Adrenal gland (tissue), 19 donors: ENCODE measurements at regions of chr14 and their contacts with region 1.

Region 1: GRCh38 chr14:61894452-61895077 is 132.3 kb downstream of the SNAPC1 start:
- DNase-seq: peak; percentile 27 to 80 (median 62)
- H3K4me3 ChIP-seq: no peak overlapping the region
- H3K27ac ChIP-seq: no peak overlapping the region
- H3K4me1 ChIP-seq: no peaks in the 10 kb centered on the region
- H3K27me3 ChIP-seq: no peaks in the 10 kb centered on the region
- CTCF ChIP-seq: peak; percentile 31 to 68 (median 47)
- POLR2A ChIP-seq: no peak

Region 2: GRCh38 chr14:61918998-61919397 is 24.4 kb after region 1 on chr14:
- intact Hi-C with region 1: no loop called
- DNase-seq: no peak
- H3K4me3 ChIP-seq: no peak overlapping the region
- H3K27ac ChIP-seq: no peak overlapping the region
- H3K4me1 ChIP-seq: no peaks in the 10 kb centered on the region
- H3K27me3 ChIP-seq: no peaks in the 10 kb centered on the region
- CTCF ChIP-seq: no peak
- POLR2A ChIP-seq: no peak

Region 3: DNA sequence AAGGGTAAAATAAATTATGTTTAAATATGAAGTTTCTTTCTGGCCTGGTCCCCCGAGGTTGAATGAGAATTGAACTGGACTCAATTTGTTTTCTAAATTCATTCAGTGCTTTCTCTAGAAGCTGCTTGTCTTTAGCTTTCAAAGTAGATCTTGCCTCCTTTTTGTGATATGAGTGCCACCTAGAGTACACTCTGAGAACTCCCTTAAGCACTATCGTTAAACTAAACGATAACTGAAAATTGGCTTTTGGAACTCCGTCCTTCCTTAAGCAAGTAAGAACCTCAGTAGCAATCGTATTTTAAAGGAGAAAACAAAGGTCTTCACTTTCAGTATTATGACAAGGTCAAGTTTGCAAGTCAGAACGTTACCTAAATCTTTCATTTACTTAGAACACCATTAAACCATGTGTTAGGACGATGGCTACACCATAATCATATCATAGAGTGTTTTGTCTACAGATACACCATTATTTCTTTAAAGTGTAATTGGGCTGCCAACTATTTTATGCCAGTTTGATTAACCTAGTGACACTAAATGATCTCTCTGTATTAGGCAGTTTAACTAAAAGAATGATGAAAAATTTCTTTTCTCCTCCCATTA is 232.4 kb after region 1 on chr14:
- intact Hi-C with region 1: loop called in 1 of 2 experiments (anchors 10 kb)
- DNase-seq: peak in 2 of 7 donors; percentile 6 to 17
- H3K4me3 ChIP-seq: no peak overlapping the region
- H3K27ac ChIP-seq: no peak overlapping the region
- H3K4me1 ChIP-seq: no peaks in the 10 kb centered on the region
- H3K27me3 ChIP-seq: peaks cover 6% of the 10 kb centered on the region
- CTCF ChIP-seq: peak; percentile 55 to 78 (median 66)
- POLR2A ChIP-seq: no peak

Region 4: DNA sequence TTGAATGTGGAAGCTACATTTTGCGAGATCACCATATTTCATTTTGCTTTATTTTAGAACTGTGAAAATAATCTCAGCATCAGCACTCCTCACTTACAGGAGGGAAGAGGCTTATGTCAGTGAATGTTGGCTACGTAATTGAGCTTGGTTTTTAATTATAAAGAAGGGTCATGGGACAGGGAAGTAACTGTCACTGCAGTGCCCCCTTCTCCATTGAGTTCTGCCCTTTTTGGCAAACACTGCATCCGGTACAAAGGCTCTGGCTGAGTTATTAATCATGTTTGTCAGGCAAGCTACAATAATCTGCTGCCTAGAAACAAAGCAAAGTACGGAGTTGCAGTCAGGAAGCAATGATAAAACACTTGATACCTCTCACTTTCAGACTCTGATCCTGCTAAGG is 414.3 kb after region 1 on chr14:
- intact Hi-C with region 1: no loop called
- DNase-seq: peak in 5 of 7 donors; percentile 4 to 70 (median 19)
- H3K4me3 ChIP-seq: no peak overlapping the region
- H3K27ac ChIP-seq: peak overlapping the region in 1 of 5 donors; percentile 26
- H3K4me1 ChIP-seq: no peaks in the 10 kb centered on the region
- H3K27me3 ChIP-seq: no peaks in the 10 kb centered on the region
- CTCF ChIP-seq: no peak
- POLR2A ChIP-seq: no peak